Right ventricle myocardium inferior (tissue), 1 donor: ENCODE measurements at regions of chr1 and their contacts with region 1.

Region 1: GRCh38 chr1:202998836-202999750 is 8.1 kb upstream of the TMEM183A start:
- DNase-seq: no peak
- ATAC-seq: no peak

Region 2: GRCh38 chr1:202750758-202751157 is 248.3 kb before region 1 on chr1:
- intact Hi-C with region 1: loop called (anchors 10 kb)
- DNase-seq: no peak
- ATAC-seq: no peak

Region 3: DNA sequence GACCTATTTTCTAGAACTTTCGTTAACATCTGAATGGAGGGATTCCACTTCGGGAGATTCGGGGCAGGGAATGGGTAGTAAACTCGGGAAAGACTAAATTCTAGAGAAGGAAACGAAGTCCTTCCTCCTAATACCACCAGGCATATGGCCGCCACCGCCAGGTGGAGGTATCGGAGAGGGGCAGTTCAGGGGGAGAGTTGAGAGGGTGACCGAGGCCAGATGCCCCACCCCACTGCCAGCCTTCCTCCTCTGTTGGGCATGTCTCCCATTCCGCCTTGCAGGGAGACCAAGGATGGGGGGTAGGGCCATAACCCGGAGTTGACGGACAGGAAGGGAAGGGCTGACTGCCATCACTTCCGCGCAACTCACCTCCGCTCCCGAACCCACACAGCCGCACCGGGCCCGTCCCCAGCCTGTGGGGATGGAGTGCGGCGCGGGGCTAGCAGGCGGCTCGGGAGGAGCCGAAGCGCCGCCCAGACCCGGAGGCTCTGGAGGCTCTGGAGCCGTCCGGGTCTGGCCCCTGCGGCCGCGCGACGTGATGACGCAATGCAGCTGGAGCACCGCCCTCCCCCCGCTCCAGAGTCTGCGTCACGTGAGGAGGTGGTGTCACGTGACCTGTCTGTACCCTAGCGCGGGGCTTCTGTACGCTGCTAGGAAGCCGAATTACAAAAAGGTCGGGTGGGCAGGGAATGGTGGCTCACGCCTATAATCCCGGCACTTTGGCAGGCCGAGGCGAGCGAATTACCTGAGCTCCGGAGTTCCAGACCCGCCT is 72.2 kb before region 1 on chr1 and contains the start of gene KLHL12:
- intact Hi-C with region 1: loop called (anchors 2 kb)
- DNase-seq: peak; percentile 99
- ATAC-seq: peak; percentile 99
- total RNA-seq, gene KLHL12: 19.3 TPM